Gastrocnemius medialis (tissue), 4 donors: ENCODE measurements at regions of chr22 and their contacts with region 1.

Region 1: GRCh38 chr22:31080848-31081649 is at the start of gene SMTN:
- DNase-seq: peak; percentile 83 to 88
- ATAC-seq: peak; percentile 82 to 83
- H3K4me3 ChIP-seq: peak within 1 kb of the TSS; percentile 60 to 78 (median 73)
- H3K27ac ChIP-seq: peak within 1 kb of the TSS; percentile 85 to 93 (median 92)
- H3K4me1 ChIP-seq: peaks cover 13 to 49% of the 10 kb centered on the region in 2 donors
- H3K27me3 ChIP-seq: no peaks in the 10 kb centered on the region
- CTCF ChIP-seq: no peak
- POLR2A ChIP-seq: peak; percentile 87 to 95
- total RNA-seq, gene SMTN: 39.5 to 104 (median 45.3) TPM

Region 2: GRCh38 chr22:30947816-30948454 is 133.1 kb before region 1 on chr22:
- in situ Hi-C with region 1: loop called in 1 of 4 experiments (anchors 5 kb)
- intact Hi-C with region 1: loop called (anchors 1 kb)
- DNase-seq: no peak
- ATAC-seq: peak; percentile 59 to 71
- H3K4me3 ChIP-seq: no peak overlapping the region
- H3K27ac ChIP-seq: peak overlapping the region in 2 of 4 donors; percentile 39 to 41
- H3K4me1 ChIP-seq: peaks cover 0 to 14% of the 10 kb centered on the region in 2 donors
- H3K27me3 ChIP-seq: no peaks in the 10 kb centered on the region
- CTCF ChIP-seq: peak; percentile 20 to 58 (median 45)
- POLR2A ChIP-seq: no peak

Region 3: DNA sequence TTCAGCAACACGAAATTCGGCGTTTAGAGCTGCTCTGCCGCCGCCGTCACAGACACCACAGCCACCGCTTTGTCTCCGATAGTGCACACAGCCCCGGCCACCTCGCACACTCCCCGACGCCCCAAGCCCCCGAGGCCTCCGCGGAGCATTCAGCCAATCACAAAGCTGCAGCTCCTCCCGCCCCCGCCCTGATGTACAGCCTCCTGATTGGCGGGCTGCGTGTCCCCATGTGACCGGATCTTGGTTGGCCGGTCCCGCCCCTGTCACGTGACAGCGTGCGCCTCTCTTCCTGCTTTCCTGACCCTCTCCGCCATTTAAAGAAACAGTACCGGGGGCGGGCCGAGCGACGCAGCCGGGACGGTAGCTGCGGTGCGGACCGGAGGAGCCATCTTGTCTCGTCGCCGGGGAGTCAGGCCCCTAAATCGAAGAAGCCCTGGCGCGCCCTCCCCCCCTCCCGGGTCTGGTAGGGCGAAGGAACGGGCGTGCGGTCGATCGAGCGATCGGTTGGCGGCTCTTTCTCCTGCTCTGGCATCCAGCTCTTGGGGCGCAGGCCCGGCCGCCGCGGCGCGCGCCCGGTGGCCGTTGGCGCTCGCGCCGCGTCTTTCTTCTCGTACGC is 112.0 kb before region 1 on chr22 and contains the start of gene TUG1:
- in situ Hi-C with region 1: loop called in 3 of 4 experiments (anchors 10 kb)
- intact Hi-C with region 1: loop called (anchors 1 kb)
- DNase-seq: peak; percentile 99
- ATAC-seq: peak; percentile 91 to 94
- H3K4me3 ChIP-seq: peak within 1 kb of the TSS; percentile 61 to 95 (median 88)
- H3K27ac ChIP-seq: peak within 1 kb of the TSS; percentile 89 to 98 (median 98)
- H3K4me1 ChIP-seq: peaks cover 67 to 69% of the 10 kb centered on the region in 2 donors
- H3K27me3 ChIP-seq: no peaks in the 10 kb centered on the region
- CTCF ChIP-seq: peak in 2 of 5 experiments; percentile 32 to 33
- POLR2A ChIP-seq: peak; percentile 93 to 97
- total RNA-seq, gene TUG1: 14.3 to 23.9 (median 15.8) TPM

Region 4: GRCh38 chr22:31036671-31037550 is 44.1 kb before region 1 on chr22:
- in situ Hi-C with region 1: no loop called
- intact Hi-C with region 1: loop called (anchors 5 kb)
- DNase-seq: peak in 1 of 2 donors; percentile 17
- ATAC-seq: no peak
- H3K4me3 ChIP-seq: peak overlapping the region in 3 of 4 donors; percentile 20 to 45 (median 33)
- H3K27ac ChIP-seq: peak overlapping the region; percentile 6 to 64 (median 28)
- H3K4me1 ChIP-seq: peaks cover 0 to 17% of the 10 kb centered on the region in 2 donors
- H3K27me3 ChIP-seq: no peaks in the 10 kb centered on the region
- CTCF ChIP-seq: no peak
- POLR2A ChIP-seq: no peak

Region 5: DNA sequence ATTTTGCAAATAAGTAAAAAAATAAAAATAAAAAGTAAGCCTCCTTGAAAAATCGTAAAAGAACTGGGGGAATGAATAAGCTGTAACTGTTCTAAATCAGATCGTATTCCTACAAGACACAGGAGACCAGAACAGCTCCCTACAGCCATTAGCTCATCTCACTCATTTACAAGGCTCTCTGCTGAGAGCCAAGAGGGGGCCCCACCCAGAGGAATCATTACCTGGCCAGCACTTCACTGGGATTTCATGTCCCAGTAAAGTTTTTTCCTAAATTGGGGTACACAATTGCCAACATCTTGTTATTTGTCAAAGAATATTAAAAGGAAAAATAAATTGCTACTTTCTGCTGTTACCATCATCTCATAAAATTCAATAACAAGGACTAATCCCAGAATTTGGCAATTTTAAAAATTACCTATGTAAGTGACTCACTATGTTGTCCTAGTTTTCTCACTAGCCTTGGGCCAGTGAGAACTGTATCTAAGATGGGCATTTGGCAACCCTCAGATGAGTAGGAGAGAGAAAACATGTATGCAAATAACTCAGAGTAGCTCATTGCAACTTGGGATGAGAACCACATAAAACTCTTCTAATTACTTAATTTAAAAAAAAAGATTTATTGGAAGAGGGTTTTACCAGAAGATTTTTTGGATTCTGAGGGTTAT is 18.4 kb before region 1 on chr22:
- in situ Hi-C with region 1: no loop called
- intact Hi-C with region 1: no loop called
- DNase-seq: no peak
- ATAC-seq: no peak
- H3K4me3 ChIP-seq: no peak overlapping the region
- H3K27ac ChIP-seq: no peak overlapping the region
- H3K4me1 ChIP-seq: no peaks in the 10 kb centered on the region
- H3K27me3 ChIP-seq: no peaks in the 10 kb centered on the region
- CTCF ChIP-seq: no peak
- POLR2A ChIP-seq: no peak

Region 6: GRCh38 chr22:31093086-31093850 is 12.2 kb after region 1 on chr22:
- in situ Hi-C with region 1: no loop called
- intact Hi-C with region 1: no loop called
- DNase-seq: peak; percentile 79 to 93
- ATAC-seq: peak; percentile 71 to 75
- H3K4me3 ChIP-seq: peak overlapping the region; percentile 53 to 62 (median 59)
- H3K27ac ChIP-seq: peak overlapping the region; percentile 93 to 98 (median 95)
- H3K4me1 ChIP-seq: peaks cover 35 to 64% of the 10 kb centered on the region in 2 donors
- H3K27me3 ChIP-seq: no peaks in the 10 kb centered on the region
- CTCF ChIP-seq: no peak
- POLR2A ChIP-seq: peak; percentile 55 to 84

Region 7: GRCh38 chr22:31148953-31149627 is 68.0 kb after region 1 on chr22:
- in situ Hi-C with region 1: loop called in 1 of 4 experiments (anchors 10 kb)
- intact Hi-C with region 1: no loop called
- DNase-seq: peak; percentile 27 to 56
- ATAC-seq: peak; percentile 90 to 96
- H3K4me3 ChIP-seq: no peak overlapping the region
- H3K27ac ChIP-seq: peak overlapping the region; percentile 36 to 70 (median 57)
- H3K4me1 ChIP-seq: peaks cover 0 to 9% of the 10 kb centered on the region in 2 donors
- H3K27me3 ChIP-seq: no peaks in the 10 kb centered on the region
- CTCF ChIP-seq: peak; percentile 87 to 95 (median 93)
- POLR2A ChIP-seq: no peak

Region 8: GRCh38 chr22:31155422-31155821 is 74.4 kb after region 1 on chr22:
- in situ Hi-C with region 1: loop called in 2 of 4 experiments (anchors 5 to 10 kb)
- intact Hi-C with region 1: no loop called
- DNase-seq: no peak
- ATAC-seq: no peak
- H3K4me3 ChIP-seq: no peak overlapping the region
- H3K27ac ChIP-seq: peak overlapping the region; percentile 3 to 53 (median 32)
- H3K4me1 ChIP-seq: peaks cover 0 to 15% of the 10 kb centered on the region in 2 donors
- H3K27me3 ChIP-seq: no peaks in the 10 kb centered on the region
- CTCF ChIP-seq: no peak
- POLR2A ChIP-seq: no peak